Left ventricle myocardium inferior (tissue), 1 donor: ENCODE measurements at regions of chr15 and their contacts with region 1.

Region 1: GRCh38 chr15:37995461-37996347 is 61.3 kb downstream of the TMCO5A start:
- DNase-seq: no peak
- H3K4me3 ChIP-seq: no peak overlapping the region
- H3K27ac ChIP-seq: peak overlapping the region; percentile 11
- H3K4me1 ChIP-seq: peaks cover 7% of the 10 kb centered on the region
- H3K27me3 ChIP-seq: peaks cover 8% of the 10 kb centered on the region
- CTCF ChIP-seq: peak; percentile 78

Region 2: DNA sequence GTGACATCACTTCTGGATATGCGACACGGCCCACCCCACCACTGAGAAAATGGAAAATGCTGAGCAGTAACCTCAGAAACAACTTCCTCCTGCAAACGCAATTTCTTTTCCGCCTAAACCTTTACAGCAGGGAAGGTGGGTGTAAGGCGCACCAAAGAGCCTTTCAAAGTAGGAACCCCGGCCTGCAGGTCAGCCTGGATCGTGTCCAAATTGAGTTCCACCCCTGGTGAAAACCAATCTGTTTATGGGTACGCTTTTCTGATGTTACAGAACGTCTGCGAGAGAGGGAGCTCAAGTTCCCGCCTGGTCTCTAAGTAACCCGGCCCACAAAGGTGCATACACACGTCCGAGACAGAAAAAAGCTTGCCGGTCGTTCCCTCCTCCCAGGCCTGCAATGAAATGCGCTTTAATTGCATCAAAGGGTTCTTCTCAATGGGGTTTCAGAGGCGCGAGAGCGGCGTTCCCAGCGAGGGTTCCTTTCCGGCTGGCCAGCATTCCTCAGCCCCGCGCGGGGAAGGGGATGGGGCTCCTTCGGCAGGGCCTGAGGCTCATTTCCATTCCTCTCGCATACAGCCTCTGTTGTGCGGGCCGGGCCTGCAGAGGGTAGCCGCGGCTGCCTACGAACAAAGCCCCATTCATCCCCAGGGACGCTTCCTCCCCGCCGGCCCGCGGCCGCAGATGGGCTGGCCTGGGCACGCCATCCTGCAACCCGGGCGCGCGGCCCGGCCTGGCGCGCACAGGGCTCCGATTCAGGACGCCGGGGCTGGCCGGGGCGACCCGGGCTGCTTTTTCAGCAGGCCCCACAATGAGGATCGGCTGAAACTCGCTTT is 76.9 kb after region 1 on chr15:
- intact Hi-C with region 1: no loop called
- DNase-seq: peak; percentile 76
- H3K4me3 ChIP-seq: peak overlapping the region; percentile 76
- H3K27ac ChIP-seq: peak overlapping the region; percentile 93
- H3K4me1 ChIP-seq: peaks cover 49% of the 10 kb centered on the region
- H3K27me3 ChIP-seq: no peaks in the 10 kb centered on the region
- CTCF ChIP-seq: peak; percentile 30

Region 3: DNA sequence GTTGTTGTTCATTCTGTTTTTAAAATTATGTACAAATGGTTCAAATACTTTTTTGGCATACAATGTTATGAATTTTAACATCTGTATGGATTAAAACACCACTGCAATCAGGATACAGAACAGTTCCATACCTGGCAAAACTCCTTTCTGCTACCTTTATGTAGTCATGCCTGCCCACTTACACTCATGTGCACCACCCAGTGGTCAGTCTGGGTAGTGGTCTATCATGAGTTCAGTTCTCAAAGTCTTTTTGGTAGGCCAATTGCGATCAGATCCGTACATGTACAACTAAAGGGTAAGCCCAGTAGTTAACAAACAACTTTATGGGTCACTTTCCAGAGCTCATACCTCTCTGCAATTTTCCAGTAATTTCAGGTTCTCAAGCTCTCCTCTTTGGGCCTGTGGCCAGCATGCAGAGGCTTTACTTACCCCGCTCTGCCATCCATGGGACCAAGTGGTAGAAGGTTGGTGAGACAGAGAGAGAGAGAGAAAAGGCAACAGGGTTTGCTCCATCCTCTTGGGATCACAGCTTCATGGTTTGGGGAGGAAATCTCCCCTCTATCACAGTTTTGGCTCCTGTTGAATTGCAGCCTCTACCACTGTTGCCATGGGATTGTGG is 394.3 kb after region 1 on chr15:
- intact Hi-C with region 1: loop called (anchors 10 kb)
- DNase-seq: peak; percentile 42
- H3K4me3 ChIP-seq: no peak overlapping the region
- H3K27ac ChIP-seq: no peak overlapping the region
- H3K4me1 ChIP-seq: no peaks in the 10 kb centered on the region
- H3K27me3 ChIP-seq: no peaks in the 10 kb centered on the region
- CTCF ChIP-seq: peak; percentile 85

Region 4: DNA sequence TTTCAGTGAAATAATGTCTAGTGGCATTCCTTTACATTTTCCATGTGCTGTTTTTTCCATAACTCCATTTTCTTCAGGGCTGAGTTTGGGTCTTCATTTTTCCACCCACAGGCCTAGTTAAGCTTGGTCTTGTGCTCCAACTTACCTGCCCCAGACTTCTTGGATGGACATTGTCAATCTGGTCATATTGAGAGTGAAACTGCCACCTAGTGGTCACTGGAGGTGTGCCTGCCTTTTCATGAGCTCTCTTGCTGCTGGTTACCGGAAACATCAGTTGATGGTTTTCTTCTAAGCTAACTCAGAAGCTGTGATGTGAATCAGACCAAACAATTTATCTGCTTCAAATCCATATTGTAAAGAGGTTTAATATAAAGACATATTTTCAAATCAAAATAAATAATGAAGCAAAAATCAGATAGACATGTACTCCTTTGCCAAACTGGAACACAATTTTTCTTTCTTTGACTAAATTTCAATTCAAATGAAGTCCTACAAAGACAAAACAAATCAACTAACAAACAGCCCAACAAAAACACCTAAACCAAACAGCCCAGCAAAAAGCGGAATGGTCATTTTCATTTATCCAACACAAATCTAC is 704.0 kb after region 1 on chr15:
- intact Hi-C with region 1: loop called (anchors 10 kb)
- DNase-seq: peak; percentile 18
- H3K4me3 ChIP-seq: no peak overlapping the region
- H3K27ac ChIP-seq: no peak overlapping the region
- H3K4me1 ChIP-seq: peaks cover 8% of the 10 kb centered on the region
- H3K27me3 ChIP-seq: peaks cover 11% of the 10 kb centered on the region
- CTCF ChIP-seq: peak; percentile 89